WTC11 (cell line): ENCODE measurements at regions of chr22 and their contacts with region 1.

Region 1: GRCh38 chr22:27792452-27793161 is 8.9 kb downstream of the MN1 start:
- DNase-seq: no peak
- ATAC-seq: no peak
- H3K4me3 Mint-ChIP-seq: peak overlapping the region; percentile 34; the same call in 1 of the 2 replicates
- H3K27ac Mint-ChIP-seq: no peak overlapping the region
- H3K4me1 Mint-ChIP-seq: peaks cover 71% of the 10 kb centered on the region
- H3K27me3 Mint-ChIP-seq: peaks cover 82% of the 10 kb centered on the region
- CTCF ChIP-seq: no peak

Region 2: DNA sequence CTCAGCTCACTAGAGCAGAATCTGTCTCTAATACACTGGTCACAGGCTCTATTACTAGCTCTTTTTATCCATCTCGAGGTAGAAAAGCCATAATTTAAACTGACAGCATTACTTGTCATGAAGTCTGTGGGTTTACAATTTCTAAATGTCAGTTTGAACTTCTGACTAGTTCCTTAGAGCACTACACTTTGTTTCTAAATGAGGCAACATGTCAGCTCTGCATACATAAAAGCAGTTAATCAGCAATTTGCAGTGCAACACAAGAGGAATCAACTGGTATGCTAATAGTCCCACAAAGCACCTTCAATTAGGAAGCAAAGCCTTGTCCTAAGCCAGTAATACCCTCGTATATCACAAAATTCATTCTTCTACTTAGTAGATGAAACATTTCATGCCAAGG is 565.7 kb after region 1 on chr22:
- CTCF ChIA-PET with region 1: no interaction called
- POLR2A ChIA-PET with region 1: interaction called, 10 read pairs
- DNase-seq: no peak
- ATAC-seq: no peak; the same call in 1 of the 2 replicates
- H3K4me3 Mint-ChIP-seq: no peak overlapping the region
- H3K27ac Mint-ChIP-seq: no peak overlapping the region
- H3K4me1 Mint-ChIP-seq: peaks cover 10% of the 10 kb centered on the region
- H3K27me3 Mint-ChIP-seq: peaks cover 7% of the 10 kb centered on the region
- CTCF ChIP-seq: no peak